ENCODE measurements at regions of chr10 and their contacts with region 1.

Region 1: DNA sequence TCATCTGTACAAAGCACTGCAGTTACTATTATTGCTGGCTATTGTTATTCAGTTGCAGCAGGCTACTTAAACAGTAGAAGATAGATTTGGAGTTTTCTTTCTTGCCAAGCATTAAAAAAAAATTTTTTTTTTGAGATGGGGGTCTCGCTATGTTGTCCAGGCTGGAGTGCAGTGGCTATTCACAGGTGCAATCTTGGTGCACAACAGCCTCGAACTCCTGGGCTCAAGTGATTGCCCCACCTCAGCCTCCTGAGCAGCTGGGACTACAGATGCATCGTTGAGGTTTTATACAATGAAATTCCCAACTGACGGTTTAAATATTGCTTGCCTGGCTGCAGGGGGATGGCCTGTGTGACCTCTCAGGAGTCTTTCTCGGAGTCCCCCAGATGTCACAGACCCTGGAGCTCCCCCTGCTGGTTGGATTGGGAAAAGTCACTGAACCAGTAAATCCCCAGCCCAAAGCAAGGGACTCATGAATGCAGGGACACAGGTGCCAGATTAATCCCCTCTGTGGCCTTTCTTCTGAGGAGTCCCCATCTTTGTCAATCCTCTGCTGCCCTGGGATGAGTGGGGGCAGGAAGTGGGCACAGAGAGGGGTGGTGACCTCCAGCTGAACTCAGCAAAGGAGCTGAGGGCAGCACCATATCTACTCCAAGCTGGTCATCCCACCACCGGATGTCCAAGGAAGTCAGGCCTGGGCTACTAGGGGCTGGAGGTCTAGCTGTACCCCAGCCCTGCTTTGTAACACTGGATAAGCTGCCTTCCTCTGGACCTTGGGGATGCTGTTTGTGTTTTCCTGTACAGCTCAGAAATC is 149.6 kb downstream of the C10orf105 start:
- DNase-seq: peak; percentile 73
- ATAC-seq: peak; percentile 60 to 63

Region 2: DNA sequence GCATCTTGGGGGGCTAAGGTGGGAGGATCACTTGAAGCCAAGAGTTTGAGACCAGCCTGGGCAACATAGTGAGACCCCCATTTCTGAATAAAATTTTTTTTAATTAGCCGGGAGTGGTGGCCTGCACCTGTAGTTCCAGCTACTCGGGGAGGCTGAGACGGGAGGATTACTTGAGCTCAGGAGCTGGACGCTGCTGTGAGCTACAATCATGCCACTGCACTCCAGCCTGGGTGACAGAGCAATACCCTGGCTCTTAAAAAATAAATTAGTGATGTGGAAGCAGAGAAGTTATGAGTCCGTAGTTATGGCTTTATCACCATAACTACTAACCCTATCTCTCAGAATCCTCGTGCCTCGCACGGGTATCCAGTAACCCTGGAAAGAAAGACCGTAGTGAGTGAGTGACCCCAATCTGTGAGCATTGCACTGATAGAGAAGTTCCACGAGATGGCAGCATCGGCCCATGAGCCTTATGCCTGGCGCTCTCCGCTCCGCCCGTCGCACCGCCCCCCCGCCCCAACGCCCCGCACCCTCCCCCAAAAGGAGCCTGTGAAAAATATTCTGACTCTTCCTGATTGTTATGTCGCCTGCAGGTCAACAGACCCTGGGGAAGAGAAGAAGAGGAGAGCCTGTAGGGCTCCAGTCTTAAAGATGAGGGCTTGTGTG is 255.8 kb before region 1 on chr10:
- intact Hi-C with region 1: loop called in 1 of 2 experiments (anchors 5 kb)
- DNase-seq: peak; percentile 64
- ATAC-seq: peak; percentile 65 to 71

Region 3: GRCh38 chr10:71396084-71396720 is 173.8 kb before region 1 on chr10:
- intact Hi-C with region 1: loop called (anchors 1 to 5 kb)
- DNase-seq: peak; percentile 70
- ATAC-seq: peak; percentile 85 to 93

Measured in left cardiac atrium (tissue), 4 donors.